Upper lobe of right lung (tissue), 1 donor: ENCODE measurements at regions of chr11 and their contacts with region 1.

Region 1: GRCh38 chr11:73347067-73347466 is 29.1 kb upstream of the RELT start:
- DNase-seq: no peak
- ATAC-seq: no peak
- H3K4me3 ChIP-seq: no peak overlapping the region
- H3K27ac ChIP-seq: no peak overlapping the region
- H3K4me1 ChIP-seq: peaks cover 4% of the 10 kb centered on the region
- H3K27me3 ChIP-seq: no peaks in the 10 kb centered on the region
- CTCF ChIP-seq: no peak

Region 2: DNA sequence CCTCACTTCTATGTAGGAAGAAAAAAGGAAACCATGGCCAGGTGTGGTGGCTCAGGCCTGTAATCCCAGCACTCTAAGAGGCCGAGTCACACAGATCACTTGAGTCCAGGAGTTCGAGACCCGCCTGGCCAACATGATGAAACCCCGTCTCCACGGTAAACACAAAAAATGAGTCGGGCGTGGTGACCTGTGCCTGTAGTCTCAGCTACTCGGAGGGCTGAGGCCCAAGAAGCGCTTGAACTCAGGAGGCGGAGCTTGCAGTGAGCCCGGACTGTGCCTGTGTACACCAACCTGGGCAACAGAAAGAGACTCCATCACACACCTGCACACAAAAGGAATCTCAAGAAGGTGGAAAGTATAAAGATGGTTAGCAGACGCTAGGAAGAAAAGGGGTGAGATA is 1451.1 kb before region 1 on chr11:
- intact Hi-C with region 1: no loop called
- DNase-seq: no peak
- ATAC-seq: no peak
- H3K4me3 ChIP-seq: no peak overlapping the region
- H3K27ac ChIP-seq: no peak overlapping the region
- H3K4me1 ChIP-seq: no peaks in the 10 kb centered on the region
- H3K27me3 ChIP-seq: no peaks in the 10 kb centered on the region
- CTCF ChIP-seq: no peak

Region 3: DNA sequence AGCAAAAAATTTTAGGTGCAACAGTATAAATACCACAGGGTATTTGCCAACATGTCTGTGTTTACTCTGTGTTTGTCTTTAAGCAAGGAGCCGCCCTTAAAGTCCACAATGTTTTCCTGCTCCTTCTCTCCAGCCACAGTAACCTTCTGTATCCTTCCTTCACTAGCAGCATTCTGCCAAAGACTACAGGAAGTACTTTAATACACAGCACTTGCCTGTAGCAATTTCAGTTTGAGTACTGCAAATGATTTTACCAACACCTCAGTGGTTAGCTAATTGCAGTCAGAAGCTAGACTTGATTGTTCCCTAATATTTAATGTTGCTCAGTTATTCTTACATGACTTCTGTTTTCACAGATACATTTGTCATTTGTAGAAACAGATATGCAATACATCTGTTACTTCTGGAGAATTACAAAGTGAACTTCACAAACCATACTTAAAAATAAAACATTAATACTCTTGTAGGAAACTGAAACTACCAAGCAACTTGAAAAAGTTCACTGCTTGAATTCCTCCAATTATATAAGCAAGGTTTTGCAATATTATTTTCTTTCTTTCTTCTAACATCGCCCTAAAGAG is 274.1 kb before region 1 on chr11:
- intact Hi-C with region 1: no loop called
- DNase-seq: no peak
- ATAC-seq: peak; percentile 97
- H3K4me3 ChIP-seq: peak overlapping the region; percentile 14
- H3K27ac ChIP-seq: peak overlapping the region; percentile 64
- H3K4me1 ChIP-seq: peaks cover 30% of the 10 kb centered on the region
- H3K27me3 ChIP-seq: no peaks in the 10 kb centered on the region
- CTCF ChIP-seq: no peak

Region 4: DNA sequence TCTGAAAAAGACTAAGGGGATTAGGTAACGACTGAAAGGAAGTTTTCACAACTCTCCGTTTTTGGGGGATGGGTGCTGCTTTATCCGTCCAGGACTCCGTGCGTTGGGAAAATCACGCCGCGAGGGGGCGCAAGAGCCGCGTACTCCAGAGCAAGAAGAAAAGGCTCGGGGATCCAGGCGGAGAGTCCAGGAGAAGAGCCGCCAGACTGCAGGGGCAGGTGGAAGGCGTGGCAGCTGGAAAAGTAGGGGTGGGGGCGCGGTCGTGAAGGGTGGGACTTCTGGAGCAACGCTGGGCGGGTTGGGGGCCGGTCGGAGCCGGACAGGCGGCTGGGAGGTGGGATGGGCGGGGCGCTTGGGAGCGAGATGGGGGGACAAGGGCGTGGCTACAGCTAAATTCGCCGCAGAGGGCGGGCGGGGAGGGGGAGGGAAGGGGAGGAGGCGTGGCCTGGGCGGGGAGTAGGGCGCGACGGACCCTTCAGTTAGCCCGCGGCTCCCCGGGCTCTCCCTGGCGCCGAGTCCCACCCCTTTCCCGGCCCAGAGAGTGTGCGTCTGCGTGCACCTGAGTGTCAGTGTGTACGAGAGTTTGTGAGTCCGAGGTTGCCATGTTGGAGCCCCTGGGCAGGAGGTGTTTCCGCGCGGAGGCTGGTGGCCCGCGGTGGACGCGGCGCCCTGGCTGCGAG is 39.6 kb before region 1 on chr11:
- intact Hi-C with region 1: loop called (anchors 5 kb)
- DNase-seq: peak; percentile 99
- ATAC-seq: peak; percentile 78
- H3K4me3 ChIP-seq: peak overlapping the region; percentile 76
- H3K27ac ChIP-seq: peak overlapping the region; percentile 98
- H3K4me1 ChIP-seq: peaks cover 30% of the 10 kb centered on the region
- H3K27me3 ChIP-seq: no peaks in the 10 kb centered on the region
- CTCF ChIP-seq: peak; percentile 76

Region 5: GRCh38 chr11:73633999-73634398 is 286.9 kb after region 1 on chr11:
- intact Hi-C with region 1: no loop called
- DNase-seq: no peak
- ATAC-seq: no peak
- H3K4me3 ChIP-seq: no peak overlapping the region
- H3K27ac ChIP-seq: no peak overlapping the region
- H3K4me1 ChIP-seq: no peaks in the 10 kb centered on the region
- H3K27me3 ChIP-seq: no peaks in the 10 kb centered on the region
- CTCF ChIP-seq: no peak

Region 6: GRCh38 chr11:73856031-73856567 is 509.0 kb after region 1 on chr11:
- intact Hi-C with region 1: no loop called
- DNase-seq: no peak
- ATAC-seq: no peak
- H3K4me3 ChIP-seq: no peak overlapping the region
- H3K27ac ChIP-seq: no peak overlapping the region
- H3K4me1 ChIP-seq: no peaks in the 10 kb centered on the region
- H3K27me3 ChIP-seq: no peaks in the 10 kb centered on the region
- CTCF ChIP-seq: no peak